ENCODE measurements at regions of chr20 and their contacts with region 1.

Region 1: DNA sequence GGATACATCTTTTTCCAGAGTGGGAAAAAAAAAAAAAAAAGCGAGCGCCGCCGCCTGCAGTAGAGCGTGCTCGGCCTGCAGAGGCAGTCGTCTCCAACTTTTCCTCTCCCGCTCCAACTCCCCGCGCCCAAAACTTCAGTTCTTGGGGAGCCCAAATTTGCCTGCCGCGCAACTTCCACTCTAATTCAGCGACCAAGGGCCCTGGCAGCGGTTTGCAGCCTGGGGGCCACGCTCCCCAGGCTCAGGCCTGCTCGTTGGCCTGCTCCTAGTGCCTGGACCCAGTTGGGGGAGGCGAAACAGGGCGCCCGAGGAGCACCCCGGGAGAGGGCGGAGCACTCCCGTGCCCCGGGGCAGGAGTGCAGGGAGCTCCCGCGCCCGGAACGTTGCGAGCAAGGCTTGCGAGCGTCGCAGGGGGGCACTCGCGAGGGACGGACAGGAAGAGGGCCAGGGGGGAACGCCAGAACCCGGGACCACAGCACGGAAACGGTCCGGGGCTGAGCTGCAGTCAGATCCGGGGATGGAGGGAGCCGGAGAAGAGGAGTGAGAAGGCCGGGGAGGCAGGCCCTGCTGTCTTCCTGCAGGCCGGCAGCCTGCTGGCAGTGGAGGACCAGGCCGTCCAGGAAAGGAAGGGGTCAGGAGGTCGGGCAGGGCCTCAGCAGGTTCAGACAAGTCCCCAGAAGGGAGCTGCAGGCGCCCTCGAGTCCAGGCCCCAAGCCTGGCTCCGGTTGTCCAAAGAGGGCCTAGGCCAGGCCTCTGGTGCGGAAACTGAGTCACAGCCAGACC is at the start of gene STX16:
- DNase-seq: peak; percentile 80 to 90 (median 88)
- H3K4me3 ChIP-seq: peak within 1 kb of the TSS; percentile 68 to 100 (median 91)
- H3K4me3 Mint-ChIP-seq: peak within 1 kb of the TSS; percentile 96 to 97
- H3K27ac ChIP-seq: peak within 1 kb of the TSS; percentile 95 to 98
- H3K27ac Mint-ChIP-seq: peak within 1 kb of the TSS; percentile 96 to 99 (median 98)
- H3K4me1 ChIP-seq: peaks cover 21 to 44% of the 10 kb centered on the region in 2 donors
- H3K4me1 Mint-ChIP-seq: peaks cover 20% of the 10 kb centered on the region
- H3K27me3 ChIP-seq: peaks cover 3 to 18% of the 10 kb centered on the region in 2 donors
- H3K27me3 Mint-ChIP-seq: peaks cover 12 to 15% (median 14%) of the 10 kb centered on the region in 3 donors
- CTCF ChIP-seq: peak; percentile 92
- polyA plus RNA-seq, gene STX16: 15.6 to 165 (median 27.4) TPM

Region 2: GRCh38 chr20:58309575-58310290 is 341.2 kb before region 1 on chr20 and contains the start of gene RAB22A:
- intact Hi-C with region 1: loop called in 1 of 2 experiments (anchors 5 kb)
- DNase-seq: peak; percentile 77 to 90 (median 83)
- H3K4me3 ChIP-seq: peak within 1 kb of the TSS; percentile 85 to 99 (median 85)
- H3K4me3 Mint-ChIP-seq: peak within 1 kb of the TSS; percentile 88 to 91
- H3K27ac ChIP-seq: peak within 1 kb of the TSS; percentile 80 to 90
- H3K27ac Mint-ChIP-seq: peak within 1 kb of the TSS; percentile 88 to 98 (median 93)
- H3K4me1 ChIP-seq: peaks cover 46 to 57% of the 10 kb centered on the region in 2 donors
- H3K4me1 Mint-ChIP-seq: peaks cover 49% of the 10 kb centered on the region
- H3K27me3 ChIP-seq: no peaks in the 10 kb centered on the region
- H3K27me3 Mint-ChIP-seq: peaks cover 0 to 6% (median 0%) of the 10 kb centered on the region in 3 donors
- CTCF ChIP-seq: no peak
- polyA plus RNA-seq, gene RAB22A: 5.8 to 10.6 (median 9.8) TPM

Region 3: GRCh38 chr20:58598211-58599014 is 52.6 kb before region 1 on chr20:
- intact Hi-C with region 1: no loop called
- DNase-seq: no peak
- H3K4me3 ChIP-seq: no peak overlapping the region
- H3K4me3 Mint-ChIP-seq: no peak overlapping the region
- H3K27ac ChIP-seq: no peak overlapping the region
- H3K27ac Mint-ChIP-seq: no peak overlapping the region
- H3K4me1 ChIP-seq: no peaks in the 10 kb centered on the region
- H3K4me1 Mint-ChIP-seq: no peaks in the 10 kb centered on the region
- H3K27me3 ChIP-seq: no peaks in the 10 kb centered on the region
- H3K27me3 Mint-ChIP-seq: peaks cover 3 to 8% (median 5%) of the 10 kb centered on the region in 3 donors
- CTCF ChIP-seq: no peak

Region 4: DNA sequence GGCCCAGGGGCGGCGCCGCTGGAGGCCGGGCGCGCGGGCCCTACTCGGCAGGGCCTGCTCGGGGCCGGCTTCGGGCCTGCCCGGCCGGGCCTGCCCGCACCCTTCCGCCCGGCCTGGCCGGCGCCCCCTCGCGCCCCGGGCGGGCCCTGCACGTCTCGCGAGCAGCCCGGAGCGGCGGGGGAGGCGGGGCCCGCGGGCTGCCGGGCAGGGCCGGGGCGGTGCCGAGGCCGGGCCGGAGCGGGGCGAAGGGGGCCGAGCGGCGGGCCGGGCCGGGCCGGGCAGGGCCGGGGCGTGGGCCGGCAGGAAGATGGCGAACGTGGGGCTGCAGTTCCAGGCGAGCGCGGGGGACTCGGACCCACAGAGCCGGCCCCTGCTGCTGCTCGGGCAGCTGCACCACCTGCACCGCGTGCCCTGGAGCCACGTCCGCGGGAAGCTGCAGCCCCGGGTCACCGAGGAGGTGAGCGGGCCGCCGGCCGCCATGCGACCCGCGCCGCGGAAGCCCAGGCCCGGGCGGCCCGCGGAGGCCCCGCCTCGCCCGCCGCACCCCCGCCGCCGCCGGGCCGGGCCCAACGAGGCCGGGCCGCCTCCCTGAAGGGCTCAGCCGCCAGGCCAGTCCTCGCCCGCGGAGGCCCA is 41.7 kb after region 1 on chr20 and contains the start of gene NPEPL1:
- intact Hi-C with region 1: loop called (anchors 2 kb)
- DNase-seq: peak; percentile 55 to 78 (median 72)
- H3K4me3 ChIP-seq: peak within 1 kb of the TSS; percentile 38 to 75 (median 53)
- H3K4me3 Mint-ChIP-seq: peak within 1 kb of the TSS; percentile 80 to 84
- H3K27ac ChIP-seq: peak within 1 kb of the TSS; percentile 99
- H3K27ac Mint-ChIP-seq: peak within 1 kb of the TSS; percentile 99
- H3K4me1 ChIP-seq: peaks cover 47 to 61% of the 10 kb centered on the region in 2 donors
- H3K4me1 Mint-ChIP-seq: peaks cover 34% of the 10 kb centered on the region
- H3K27me3 ChIP-seq: no peaks in the 10 kb centered on the region
- H3K27me3 Mint-ChIP-seq: peaks cover 0 to 4% (median 2%) of the 10 kb centered on the region in 3 donors
- CTCF ChIP-seq: no peak
- polyA plus RNA-seq, gene NPEPL1: 37.6 to 109 (median 39.6) TPM

Region 5: GRCh38 chr20:58716644-58717510 is 65.9 kb after region 1 on chr20:
- intact Hi-C with region 1: no loop called
- DNase-seq: peak in 1 of 3 donors; percentile 2
- H3K4me3 ChIP-seq: no peak overlapping the region
- H3K4me3 Mint-ChIP-seq: no peak overlapping the region
- H3K27ac ChIP-seq: no peak overlapping the region
- H3K27ac Mint-ChIP-seq: peak overlapping the region in 1 of 7 donors; percentile 40
- H3K4me1 ChIP-seq: peaks cover 0 to 3% of the 10 kb centered on the region in 2 donors
- H3K4me1 Mint-ChIP-seq: peaks cover 2% of the 10 kb centered on the region
- H3K27me3 ChIP-seq: no peaks in the 10 kb centered on the region
- H3K27me3 Mint-ChIP-seq: peaks cover 2 to 4% (median 3%) of the 10 kb centered on the region in 3 donors
- CTCF ChIP-seq: no peak

Region 6: GRCh38 chr20:58829531-58829941 is 178.6 kb after region 1 on chr20:
- intact Hi-C with region 1: no loop called
- DNase-seq: no peak
- H3K4me3 ChIP-seq: no peak overlapping the region
- H3K4me3 Mint-ChIP-seq: no peak overlapping the region
- H3K27ac ChIP-seq: no peak overlapping the region
- H3K27ac Mint-ChIP-seq: no peak overlapping the region
- H3K4me1 ChIP-seq: no peaks in the 10 kb centered on the region
- H3K4me1 Mint-ChIP-seq: peaks cover 2% of the 10 kb centered on the region
- H3K27me3 ChIP-seq: peaks cover 0 to 2% of the 10 kb centered on the region in 2 donors
- H3K27me3 Mint-ChIP-seq: peaks cover 12 to 24% (median 15%) of the 10 kb centered on the region in 3 donors
- CTCF ChIP-seq: no peak

Region 7: DNA sequence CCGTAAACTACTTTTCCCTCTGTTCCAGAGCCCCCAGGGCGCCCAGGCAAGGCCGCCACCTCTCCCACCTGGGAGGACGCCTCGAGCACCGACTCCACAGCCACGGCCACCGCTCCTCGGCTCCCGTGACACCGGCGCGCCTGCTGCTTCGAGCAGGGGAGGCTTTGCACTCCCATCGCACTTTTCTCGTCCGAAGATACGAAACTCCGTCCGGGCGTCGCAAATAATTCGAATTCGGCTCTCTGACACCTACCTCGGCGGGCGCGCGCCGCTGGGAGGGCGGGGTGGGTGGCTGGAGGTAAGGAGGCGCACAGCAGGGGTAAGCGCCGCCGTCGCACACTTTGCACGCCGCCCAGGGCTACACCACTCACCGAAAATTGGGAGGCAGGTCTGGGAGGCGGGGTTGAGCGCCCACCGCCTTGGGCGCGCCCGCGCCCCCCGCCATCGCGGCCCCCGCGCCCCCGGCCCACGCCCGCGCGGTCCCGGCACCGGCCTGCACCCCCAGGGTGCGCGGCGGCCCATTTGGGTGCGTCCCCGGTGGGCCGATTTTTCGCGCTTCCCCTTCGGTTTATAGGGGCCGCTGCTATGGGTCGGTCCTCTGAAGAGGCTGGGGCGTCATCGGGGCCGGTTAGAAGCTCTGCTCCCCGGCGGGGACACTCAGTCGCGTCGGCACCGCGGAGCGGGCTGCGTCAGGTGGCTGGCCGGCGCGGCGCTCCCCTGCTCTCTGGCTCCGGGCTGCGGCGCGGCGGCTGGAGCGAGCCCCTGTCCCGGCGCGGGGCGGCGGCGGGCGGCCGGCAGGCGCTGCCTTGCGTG is 237.8 kb after region 1 on chr20:
- intact Hi-C with region 1: loop called in 1 of 2 experiments (anchors 10 kb)
- DNase-seq: peak; percentile 75 to 85 (median 76)
- H3K4me3 ChIP-seq: peak overlapping the region; percentile 77 to 94 (median 88)
- H3K4me3 Mint-ChIP-seq: peak overlapping the region; percentile 77 to 82
- H3K27ac ChIP-seq: peak overlapping the region in 1 of 2 donors; percentile 59
- H3K27ac Mint-ChIP-seq: peak overlapping the region in 4 of 7 donors; percentile 32 to 75 (median 58)
- H3K4me1 ChIP-seq: peaks cover 13 to 28% of the 10 kb centered on the region in 2 donors
- H3K4me1 Mint-ChIP-seq: peaks cover 15% of the 10 kb centered on the region
- H3K27me3 ChIP-seq: no peaks in the 10 kb centered on the region
- H3K27me3 Mint-ChIP-seq: peaks cover 2 to 7% (median 3%) of the 10 kb centered on the region in 3 donors
- CTCF ChIP-seq: no peak

Region 8: DNA sequence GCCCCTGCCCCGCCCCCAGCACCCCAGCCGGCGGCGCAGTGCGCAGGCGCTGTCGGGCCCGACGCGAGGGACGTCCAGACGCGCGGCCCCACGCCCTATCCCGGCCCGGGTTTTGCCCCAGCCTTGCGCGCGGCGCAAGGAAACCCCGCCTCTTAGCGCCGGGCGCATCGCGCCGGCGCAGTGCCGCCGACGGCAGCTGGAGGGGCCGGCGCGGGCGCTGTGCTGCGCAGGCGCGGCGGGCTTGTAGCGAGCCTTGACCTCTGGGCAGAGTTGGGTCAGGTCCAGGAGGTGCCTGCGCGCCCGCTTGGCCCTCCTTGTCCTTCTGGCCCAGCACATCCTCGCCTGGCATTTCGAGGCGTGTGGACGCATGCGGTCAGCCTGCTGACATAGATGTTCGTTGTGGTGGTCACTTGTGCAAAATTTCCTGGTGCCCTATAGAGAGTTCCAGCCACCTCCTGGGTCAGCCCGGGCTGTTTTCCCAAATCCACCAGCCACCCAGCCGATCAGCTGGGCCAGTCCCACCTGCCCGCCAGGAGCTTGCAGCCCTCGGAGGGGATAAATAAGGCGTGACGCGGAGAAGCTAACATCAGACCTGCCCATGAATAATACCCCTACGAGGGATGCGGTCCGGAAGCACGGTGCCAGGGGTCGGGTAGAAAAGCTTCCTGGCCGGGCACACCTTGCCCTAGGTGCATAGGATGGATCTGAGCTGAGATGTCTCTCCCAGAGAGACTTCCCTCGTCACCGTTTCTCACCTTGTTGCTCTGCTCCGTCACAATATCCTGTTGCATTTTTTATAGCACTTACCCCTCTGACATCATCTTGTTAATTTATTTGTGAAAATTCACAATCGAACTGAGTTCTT is 392.1 kb after region 1 on chr20:
- intact Hi-C with region 1: loop called in 1 of 2 experiments (anchors 10 kb)
- DNase-seq: peak; percentile 91 to 94 (median 91)
- H3K4me3 ChIP-seq: peak overlapping the region; percentile 76 to 92 (median 79)
- H3K4me3 Mint-ChIP-seq: peak overlapping the region; percentile 85 to 91
- H3K27ac ChIP-seq: peak overlapping the region; percentile 44 to 90
- H3K27ac Mint-ChIP-seq: peak overlapping the region; percentile 86 to 96 (median 92)
- H3K4me1 ChIP-seq: peaks cover 21 to 35% of the 10 kb centered on the region in 2 donors
- H3K4me1 Mint-ChIP-seq: peaks cover 40% of the 10 kb centered on the region
- H3K27me3 ChIP-seq: no peaks in the 10 kb centered on the region
- H3K27me3 Mint-ChIP-seq: peaks cover 0 to 2% (median 2%) of the 10 kb centered on the region in 3 donors
- CTCF ChIP-seq: no peak

Measured in CD14-positive monocyte (primary cell).